MCF 10A (cell line): ENCODE measurements at regions of chr17 and their contacts with region 1.

Region 1: DNA sequence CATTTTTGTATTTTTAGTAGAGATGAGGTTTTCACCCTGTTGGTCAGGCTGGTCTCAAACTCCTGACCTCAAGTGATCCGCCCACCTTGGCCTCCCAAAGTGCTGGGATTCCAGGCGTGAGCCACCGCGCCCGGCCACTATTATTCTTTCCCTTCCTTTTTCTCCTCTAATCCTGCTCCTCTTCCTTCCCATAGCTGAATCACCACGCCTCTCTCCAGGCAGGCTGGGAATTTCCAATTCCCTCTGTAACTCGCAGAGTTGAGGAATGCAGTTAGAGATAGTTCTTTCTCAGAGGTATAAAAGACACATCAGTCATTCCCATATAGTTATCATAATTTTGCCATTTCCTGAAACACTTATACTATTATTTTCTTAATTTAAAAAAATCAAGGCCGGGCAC is 11.2 kb downstream of the METTL16 start:
- DNase-seq: no peak
- H3K4me3 Mint-ChIP-seq: no peak overlapping the region
- H3K27ac Mint-ChIP-seq: no peak overlapping the region
- H3K4me1 Mint-ChIP-seq: peaks cover 8% of the 10 kb centered on the region
- H3K27me3 Mint-ChIP-seq: no peaks in the 10 kb centered on the region
- CTCF ChIP-seq: no peak

Region 2: DNA sequence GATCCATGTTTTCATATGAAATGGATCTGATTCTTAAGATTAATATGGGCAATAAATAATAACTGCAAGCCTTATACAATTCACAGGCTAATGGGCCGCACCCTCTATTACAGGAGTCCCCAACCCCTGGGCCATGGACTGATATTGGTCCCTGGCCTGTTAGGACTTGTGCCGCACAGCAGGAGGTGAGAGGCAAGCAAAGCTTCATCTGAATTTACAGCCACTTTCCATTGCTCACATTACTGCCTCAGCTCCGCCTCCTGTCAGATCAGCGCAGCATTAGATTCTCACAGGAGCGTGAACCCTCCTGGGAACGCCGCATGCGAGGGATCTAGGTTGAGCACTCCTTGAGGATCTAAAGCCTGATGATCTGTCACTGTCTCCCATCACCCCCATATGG is 15.6 kb before region 1 on chr17:
- CTCF ChIA-PET with region 1: no interaction called
- POLR2A ChIA-PET with region 1: interaction called, 4 read pairs
- intact Hi-C with region 1: loop called (anchors 2 kb)
- DNase-seq: peak; percentile 81
- H3K4me3 Mint-ChIP-seq: peak overlapping the region; percentile 65
- H3K27ac Mint-ChIP-seq: no peak overlapping the region
- H3K4me1 Mint-ChIP-seq: peaks cover 27% of the 10 kb centered on the region
- H3K27me3 Mint-ChIP-seq: no peaks in the 10 kb centered on the region
- CTCF ChIP-seq: no peak